ENCODE measurements at regions of chr19 and their contacts with region 1.

Region 1: DNA sequence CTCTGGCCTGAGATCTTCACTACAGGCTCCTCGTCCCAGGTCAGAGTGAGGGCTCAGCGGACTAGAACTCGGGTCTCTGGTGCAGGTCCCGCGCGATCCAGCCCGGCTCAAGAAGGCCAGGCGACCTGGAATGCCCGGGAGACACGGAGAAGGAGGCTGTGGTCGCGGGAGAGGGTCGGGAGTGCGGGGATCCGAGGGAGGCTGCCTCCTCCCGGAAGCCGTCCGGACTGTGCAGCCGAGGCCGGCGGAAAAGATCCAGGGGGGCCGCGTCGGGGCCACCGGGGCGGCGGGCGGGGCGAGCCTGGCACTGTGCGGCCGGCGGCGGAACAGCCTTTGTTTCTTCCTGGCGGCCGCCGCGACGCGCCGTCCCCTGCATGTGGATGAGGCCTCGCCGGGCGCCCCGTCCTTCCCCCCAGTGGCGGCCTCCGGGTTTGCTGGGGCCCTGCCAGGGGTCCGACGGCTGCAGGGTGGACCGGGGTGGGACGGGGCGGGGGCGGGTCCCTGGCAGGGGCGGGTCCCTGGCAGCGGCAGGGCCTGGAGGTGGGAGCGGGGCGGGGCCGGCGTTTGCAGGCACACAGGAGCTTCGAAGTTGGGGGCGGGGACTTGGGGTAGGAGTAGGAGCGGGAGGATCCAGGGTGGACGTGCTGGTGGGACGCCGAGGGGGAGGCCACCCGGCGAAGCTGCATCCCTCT is 1.0 kb upstream of the SLC7A10 start:
- DNase-seq: no peak
- ATAC-seq: peak; percentile 57
- H3K4me3 ChIP-seq: peak overlapping the region; percentile 14 to 21
- H3K27ac ChIP-seq: no peak overlapping the region
- H3K4me1 ChIP-seq: no peaks in the 10 kb centered on the region
- H3K27me3 ChIP-seq: peaks cover 16% of the 10 kb centered on the region
- CTCF ChIP-seq: no peak; the same call in 1 of the 2 replicates

Region 2: GRCh38 chr19:33161201-33161600 is 65.5 kb before region 1 on chr19:
- CTCF ChIA-PET with region 1: no interaction called
- POLR2A ChIA-PET with region 1: no interaction called
- in situ Hi-C with region 1: no loop called
- intact Hi-C with region 1: no loop called
- DNase-seq: no peak
- ATAC-seq: no peak
- H3K4me3 ChIP-seq: no peak overlapping the region
- H3K27ac ChIP-seq: no peak overlapping the region
- H3K4me1 ChIP-seq: no peaks in the 10 kb centered on the region
- H3K27me3 ChIP-seq: no peaks in the 10 kb centered on the region
- CTCF ChIP-seq: no peak

Region 3: DNA sequence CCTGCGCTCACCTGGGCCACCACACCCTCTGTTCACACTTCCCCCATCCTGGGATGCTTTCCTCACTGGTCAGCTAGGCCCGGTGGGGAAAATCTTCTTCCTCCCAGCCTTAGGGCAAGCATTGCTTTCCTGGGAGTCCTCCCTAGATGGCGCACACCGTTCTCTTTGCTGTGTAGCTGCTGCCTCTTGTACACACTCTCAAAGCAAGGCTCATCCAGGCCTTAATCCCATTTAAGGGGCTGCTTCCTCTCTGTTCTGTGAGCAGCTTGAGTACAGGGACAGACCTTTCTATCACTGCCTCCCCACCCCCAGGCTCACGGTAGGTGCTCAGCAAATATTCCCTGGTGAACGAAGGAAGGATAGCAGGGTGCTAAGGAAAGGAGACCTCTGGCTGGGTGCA is 12.1 kb before region 1 on chr19:
- CTCF ChIA-PET with region 1: interaction called, 14 read pairs
- POLR2A ChIA-PET with region 1: no interaction called
- in situ Hi-C with region 1: no loop called
- intact Hi-C with region 1: no loop called
- DNase-seq: no peak
- ATAC-seq: peak; percentile 66
- H3K4me3 ChIP-seq: no peak overlapping the region
- H3K27ac ChIP-seq: no peak overlapping the region
- H3K4me1 ChIP-seq: no peaks in the 10 kb centered on the region
- H3K27me3 ChIP-seq: no peaks in the 10 kb centered on the region
- CTCF ChIP-seq: no peak; the same call in 1 of the 2 replicates

Region 4: GRCh38 chr19:33278403-33279269 is 51.9 kb after region 1 on chr19:
- CTCF ChIA-PET with region 1: no interaction called
- POLR2A ChIA-PET with region 1: no interaction called
- in situ Hi-C with region 1: no loop called
- intact Hi-C with region 1: no loop called
- DNase-seq: no peak
- ATAC-seq: no peak
- H3K4me3 ChIP-seq: no peak overlapping the region
- H3K27ac ChIP-seq: no peak overlapping the region
- H3K4me1 ChIP-seq: peaks cover 10% of the 10 kb centered on the region
- H3K27me3 ChIP-seq: no peaks in the 10 kb centered on the region
- CTCF ChIP-seq: no peak

Measured in Panc1 (cell line).